ENCODE measurements at regions of chr2 and their contacts with region 1.

Region 1: DNA sequence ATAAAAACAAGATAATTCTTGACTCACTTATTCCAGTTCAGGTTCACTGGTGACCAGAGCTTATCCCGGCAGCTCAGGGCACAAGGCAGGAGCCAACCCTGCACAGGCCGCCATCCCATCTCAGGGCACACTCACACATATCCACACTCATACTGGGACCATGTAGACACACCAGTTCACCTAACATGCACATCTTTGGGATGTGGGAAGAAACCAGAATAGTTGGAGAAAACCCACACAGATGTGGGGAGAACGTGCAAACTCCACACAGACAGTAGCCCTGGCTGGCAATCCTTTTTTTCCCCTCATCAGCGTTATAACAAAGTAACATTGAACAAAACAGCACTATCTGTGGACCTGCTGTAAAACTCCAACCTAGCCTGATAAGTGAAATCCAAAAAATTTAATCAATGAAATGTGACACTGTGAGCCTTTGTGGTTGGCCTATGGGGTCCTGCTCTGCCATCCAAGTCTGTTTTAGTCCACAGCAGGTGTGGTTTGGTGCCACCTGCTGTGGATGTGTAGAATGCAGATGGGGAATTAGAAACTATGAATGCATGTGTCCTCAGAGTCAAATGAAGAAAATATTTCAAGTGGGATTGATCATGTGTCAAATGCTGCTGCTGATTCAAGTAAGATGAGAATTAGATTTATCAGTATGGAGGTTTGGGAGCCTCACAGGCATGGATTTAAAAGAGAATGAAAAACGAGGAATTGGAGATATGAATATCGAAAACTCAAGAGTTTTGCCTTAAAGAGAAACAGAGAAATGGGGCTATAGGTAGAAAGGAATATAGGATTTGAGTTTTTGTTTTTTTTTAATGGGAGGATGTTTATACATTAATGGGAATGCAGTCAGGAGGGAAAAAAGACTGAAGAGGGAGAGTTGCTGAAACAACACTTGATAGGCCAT is 47.0 kb downstream of the UGP2 start:
- DNase-seq: peak; percentile 58
- H3K4me3 Mint-ChIP-seq: no peak overlapping the region
- H3K27ac Mint-ChIP-seq: peak overlapping the region; percentile 63
- H3K4me1 Mint-ChIP-seq: no peaks in the 10 kb centered on the region
- H3K27me3 Mint-ChIP-seq: no peaks in the 10 kb centered on the region

Region 2: DNA sequence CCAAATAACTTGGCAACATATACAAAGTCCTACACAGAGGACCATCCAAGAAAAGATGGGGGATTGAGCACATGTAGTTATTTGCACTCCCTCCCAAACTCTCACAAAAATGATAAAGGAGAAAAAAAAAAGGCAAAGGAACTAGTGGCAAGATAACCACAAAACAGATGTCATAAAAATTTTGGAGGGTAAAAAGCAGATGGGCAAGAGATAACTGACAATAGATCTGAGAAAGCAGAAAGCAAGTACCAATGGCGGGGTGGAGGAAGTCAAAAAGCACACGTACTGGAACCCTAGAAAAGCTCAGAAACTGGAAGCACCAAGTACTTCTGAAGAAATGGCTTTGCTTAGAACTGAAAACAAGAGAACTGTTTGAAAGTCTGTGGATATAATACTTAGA is 382.4 kb before region 1 on chr2:
- CTCF ChIA-PET with region 1: no interaction called
- DNase-seq: no peak
- H3K4me3 Mint-ChIP-seq: no peak overlapping the region
- H3K27ac Mint-ChIP-seq: peak overlapping the region; percentile 21
- H3K4me1 Mint-ChIP-seq: peaks cover 13% of the 10 kb centered on the region
- H3K27me3 Mint-ChIP-seq: no peaks in the 10 kb centered on the region

Region 3: GRCh38 chr2:63899639-63900038 is 10.9 kb after region 1 on chr2:
- CTCF ChIA-PET with region 1: interaction called, 11 read pairs
- DNase-seq: no peak
- H3K4me3 Mint-ChIP-seq: no peak overlapping the region
- H3K27ac Mint-ChIP-seq: no peak overlapping the region
- H3K4me1 Mint-ChIP-seq: peaks cover 6% of the 10 kb centered on the region
- H3K27me3 Mint-ChIP-seq: no peaks in the 10 kb centered on the region

Measured in activated naive CD4-positive, alpha-beta T cell treated with anti-CD3 and anti-CD28 coated beads, Interleukin-2, amount 10 ng/mL, durations not matched to agents 7 days and 5 days (primary cell).